Activated CD8-positive, alpha-beta memory T cell treated with anti-CD3 and anti-CD28 coated beads, Interleukin-2, amount 10 ng/mL, durations not matched to agents 7 days and 5 days (primary cell): ENCODE measurements at regions of chr17 and their contacts with region 1.

Region 1: DNA sequence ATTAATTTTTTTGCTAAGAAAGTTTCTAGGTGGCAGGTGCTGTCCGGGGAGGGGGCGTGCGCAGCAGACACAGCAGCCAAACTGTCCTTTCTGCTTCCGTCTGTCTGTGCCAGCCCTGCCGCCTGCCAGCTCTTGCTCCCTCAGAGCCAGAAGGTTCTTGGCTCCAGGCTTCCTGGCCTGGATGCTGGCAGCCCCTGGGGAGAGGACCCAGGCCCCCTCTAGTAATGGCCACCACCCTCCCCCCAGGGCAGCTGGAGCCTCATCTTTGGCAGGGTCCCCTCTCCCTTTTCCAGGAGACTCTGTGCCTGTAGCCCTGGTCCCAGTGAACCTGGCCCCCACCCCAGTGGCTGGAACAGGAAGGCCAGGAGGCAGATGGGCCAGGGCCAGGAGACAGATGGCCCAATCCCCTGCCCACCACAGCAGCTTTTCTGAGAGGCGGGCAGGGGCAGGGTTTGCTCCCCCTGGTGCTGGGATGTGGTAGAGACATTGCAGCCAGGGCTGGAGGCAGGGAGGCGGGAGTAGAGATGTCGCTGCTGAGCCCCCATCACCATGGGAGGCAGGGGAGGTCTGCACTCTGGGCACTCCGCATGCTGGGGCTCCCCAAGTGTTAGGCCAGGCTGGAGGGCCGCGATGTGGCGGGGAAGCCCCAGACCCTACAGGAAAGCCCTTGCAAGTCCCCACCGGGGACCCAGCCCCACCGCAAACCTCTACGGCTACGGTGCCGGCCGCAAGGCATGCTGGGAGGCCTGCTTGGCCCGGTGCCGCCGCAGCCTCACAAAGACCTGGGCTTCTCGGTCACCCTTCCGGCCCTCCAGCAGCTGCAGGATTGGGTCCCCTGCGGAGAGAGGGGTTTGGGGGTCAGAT is 16.7 kb downstream of the UNC13D start:
- DNase-seq: peak; percentile 78
- ATAC-seq: peak; percentile 59
- H3K4me3 Mint-ChIP-seq: peak overlapping the region; percentile 8
- H3K27ac Mint-ChIP-seq: peak overlapping the region; percentile 90
- H3K4me1 Mint-ChIP-seq: peaks cover 17% of the 10 kb centered on the region
- H3K27me3 Mint-ChIP-seq: no peaks in the 10 kb centered on the region

Region 2: GRCh38 chr17:75667021-75667790 is 160.3 kb before region 1 on chr17 and contains the starts of genes RECQL5 and SAP30BP:
- CTCF ChIA-PET with region 1: no interaction called
- DNase-seq: peak; percentile 99
- ATAC-seq: peak; percentile 100
- H3K4me3 Mint-ChIP-seq: no peak within 1 kb of the TSS
- H3K27ac Mint-ChIP-seq: peak within 1 kb of the TSS; percentile 64
- H3K4me1 Mint-ChIP-seq: peaks cover 22% of the 10 kb centered on the region
- H3K27me3 Mint-ChIP-seq: no peaks in the 10 kb centered on the region
- total RNA-seq, gene RECQL5: 35.5 to 46.2 TPM
- total RNA-seq, gene SAP30BP: 100.0 to 106 TPM

Region 3: GRCh38 chr17:75740631-75741077 is 86.8 kb before region 1 on chr17:
- CTCF ChIA-PET with region 1: no interaction called
- DNase-seq: no peak
- ATAC-seq: no peak
- H3K4me3 Mint-ChIP-seq: no peak overlapping the region
- H3K27ac Mint-ChIP-seq: no peak overlapping the region
- H3K4me1 Mint-ChIP-seq: peaks cover 10% of the 10 kb centered on the region
- H3K27me3 Mint-ChIP-seq: no peaks in the 10 kb centered on the region

Region 4: GRCh38 chr17:75779231-75779986 is 48.1 kb before region 1 on chr17:
- CTCF ChIA-PET with region 1: interaction called, 18 read pairs
- DNase-seq: peak; percentile 98
- ATAC-seq: peak; percentile 74
- H3K4me3 Mint-ChIP-seq: peak overlapping the region; percentile 86
- H3K27ac Mint-ChIP-seq: peak overlapping the region; percentile 99
- H3K4me1 Mint-ChIP-seq: peaks cover 51% of the 10 kb centered on the region
- H3K27me3 Mint-ChIP-seq: peaks cover 2% of the 10 kb centered on the region

Region 5: DNA sequence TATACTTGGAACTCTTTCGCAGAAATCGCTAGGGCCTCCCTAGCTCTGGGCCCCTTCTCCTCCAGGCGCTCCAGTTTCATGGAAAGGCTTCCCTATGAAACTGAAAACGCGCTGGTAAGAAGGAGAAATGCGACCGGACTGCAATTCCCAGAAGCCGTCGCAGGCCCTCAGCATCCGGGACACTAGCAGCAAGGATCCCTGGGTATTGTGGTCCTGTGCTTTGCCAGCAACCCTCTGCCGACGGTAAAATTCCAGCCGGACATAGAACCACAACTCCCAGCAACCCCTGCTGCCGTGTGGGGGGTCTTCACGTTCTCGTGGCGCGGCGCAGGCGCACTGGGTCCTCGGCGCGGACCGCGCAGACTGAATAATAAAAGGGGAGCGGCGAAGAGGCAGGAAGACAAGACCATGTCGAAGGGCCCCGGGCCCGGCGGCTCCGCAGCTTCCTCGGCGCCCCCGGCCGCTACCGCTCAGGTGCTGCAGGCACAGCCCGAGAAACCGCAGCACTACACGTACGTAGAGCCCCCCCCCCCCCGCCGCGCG is 42.9 kb before region 1 on chr17 and contains the start of gene UNK:
- CTCF ChIA-PET with region 1: interaction called, 18 read pairs
- DNase-seq: peak; percentile 99
- ATAC-seq: peak; percentile 72
- H3K4me3 Mint-ChIP-seq: peak within 1 kb of the TSS; percentile 79
- H3K27ac Mint-ChIP-seq: peak within 1 kb of the TSS; percentile 100
- H3K4me1 Mint-ChIP-seq: peaks cover 50% of the 10 kb centered on the region
- H3K27me3 Mint-ChIP-seq: peaks cover 1% of the 10 kb centered on the region
- total RNA-seq, gene UNK: 32.8 to 33.1 TPM

Region 6: GRCh38 chr17:75816674-75817073 is 10.8 kb before region 1 on chr17:
- CTCF ChIA-PET with region 1: interaction called, 10 read pairs
- DNase-seq: no peak
- ATAC-seq: no peak
- H3K4me3 Mint-ChIP-seq: no peak overlapping the region
- H3K27ac Mint-ChIP-seq: no peak overlapping the region
- H3K4me1 Mint-ChIP-seq: peaks cover 4% of the 10 kb centered on the region
- H3K27me3 Mint-ChIP-seq: no peaks in the 10 kb centered on the region

Region 7: DNA sequence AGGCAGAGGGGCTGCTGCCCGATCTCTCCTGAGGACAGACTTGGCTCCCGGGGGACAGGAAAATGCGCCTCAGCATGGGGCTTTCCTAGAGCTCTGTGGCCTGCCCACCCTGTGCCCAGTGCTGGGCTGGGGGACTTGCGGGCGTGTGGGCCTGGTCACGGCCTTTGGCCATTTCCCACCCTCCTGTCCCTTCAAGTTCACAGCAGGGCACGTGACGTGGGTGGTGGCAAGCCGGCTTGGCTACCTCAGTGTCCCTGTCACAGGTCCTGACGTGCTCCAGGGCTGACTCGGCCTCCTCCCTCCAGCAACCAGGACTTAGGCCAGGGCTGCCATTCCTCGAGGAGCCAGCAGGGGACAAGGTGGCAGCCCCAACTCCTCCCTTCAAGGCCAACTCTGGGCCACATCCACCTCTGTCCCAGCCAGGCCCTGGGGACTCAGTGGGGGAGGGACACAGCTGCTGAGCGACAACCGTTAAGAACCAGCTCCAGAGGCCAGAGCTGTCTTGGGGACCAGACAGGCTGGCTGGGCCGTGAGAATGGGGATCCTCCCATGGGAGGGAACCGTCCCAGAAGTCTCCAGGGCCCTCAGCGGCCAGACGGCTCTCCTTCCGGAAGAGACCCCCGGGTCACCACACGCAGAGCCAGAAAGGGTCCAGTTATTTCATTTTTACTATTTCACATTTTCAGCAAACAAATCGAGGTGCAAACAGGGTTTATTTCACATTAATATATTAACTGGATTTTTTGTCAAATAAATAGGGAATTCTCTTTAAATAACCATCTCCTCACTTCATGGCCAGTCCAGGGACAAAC is 17.8 kb after region 1 on chr17:
- CTCF ChIA-PET with region 1: interaction called, 21 read pairs
- DNase-seq: peak; percentile 79
- ATAC-seq: peak; percentile 52
- H3K4me3 Mint-ChIP-seq: peak overlapping the region; percentile 39
- H3K27ac Mint-ChIP-seq: peak overlapping the region; percentile 61
- H3K4me1 Mint-ChIP-seq: peaks cover 27% of the 10 kb centered on the region
- H3K27me3 Mint-ChIP-seq: no peaks in the 10 kb centered on the region

Region 8: GRCh38 chr17:75864448-75864871 is 37.0 kb after region 1 on chr17:
- CTCF ChIA-PET with region 1: interaction called, 11 read pairs
- DNase-seq: peak; percentile 90
- ATAC-seq: peak; percentile 85
- H3K4me3 Mint-ChIP-seq: peak overlapping the region; percentile 44
- H3K27ac Mint-ChIP-seq: peak overlapping the region; percentile 94
- H3K4me1 Mint-ChIP-seq: peaks cover 22% of the 10 kb centered on the region
- H3K27me3 Mint-ChIP-seq: no peaks in the 10 kb centered on the region